Posterior cingulate gyrus (tissue), 11 donors: ENCODE measurements at regions of chr7 and their contacts with region 1.

Region 1: DNA sequence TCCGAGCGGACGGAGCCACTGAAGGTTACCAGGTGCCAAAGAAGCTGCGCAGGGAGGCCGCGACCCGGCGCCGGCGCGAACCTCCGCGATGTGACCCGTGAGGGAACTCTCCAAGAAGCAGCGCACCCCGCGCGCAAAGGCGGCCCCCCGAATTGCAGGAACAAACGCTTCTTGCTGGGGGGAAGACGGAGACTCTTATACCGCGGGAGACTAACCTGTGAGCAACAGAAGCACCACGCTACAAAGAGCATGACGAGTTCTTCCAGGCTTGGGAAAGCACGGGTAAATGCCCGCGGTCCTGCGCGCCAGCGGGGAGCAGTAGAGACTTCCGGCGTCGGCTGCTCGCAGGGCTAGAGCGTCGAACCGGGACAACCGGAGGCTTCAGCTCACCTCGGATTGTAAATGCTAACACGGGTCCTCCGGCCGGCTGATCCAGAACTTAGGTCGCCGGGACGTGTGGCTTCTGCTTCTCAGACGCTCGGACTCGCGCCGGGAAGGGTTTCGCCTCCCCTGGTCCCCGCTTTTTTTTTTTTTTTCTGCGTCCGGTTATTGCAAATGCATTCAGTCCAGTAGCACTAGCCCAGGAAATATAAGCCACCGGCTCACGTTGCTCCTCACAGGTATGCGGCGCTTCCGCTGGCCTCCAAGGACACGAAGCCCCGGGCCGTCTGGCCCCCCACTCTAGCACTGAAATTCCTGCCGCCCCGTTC is at the start of gene COA1:
- DNase-seq: peak; percentile 82 to 98 (median 88)

Region 2: GRCh38 chr7:42931834-42932651 is 797.3 kb before region 1 on chr7 and contains the starts of genes MRPL32 and PSMA2:
- intact Hi-C with region 1: loop called (anchors 10 kb)
- DNase-seq: peak; percentile 93 to 99 (median 96)

Region 3: GRCh38 chr7:43454936-43455518 is 274.3 kb before region 1 on chr7:
- intact Hi-C with region 1: loop called (anchors 10 kb)
- DNase-seq: no peak

Region 4: GRCh38 chr7:43553999-43554398 is 175.4 kb before region 1 on chr7:
- intact Hi-C with region 1: no loop called
- DNase-seq: no peak

Region 5: DNA sequence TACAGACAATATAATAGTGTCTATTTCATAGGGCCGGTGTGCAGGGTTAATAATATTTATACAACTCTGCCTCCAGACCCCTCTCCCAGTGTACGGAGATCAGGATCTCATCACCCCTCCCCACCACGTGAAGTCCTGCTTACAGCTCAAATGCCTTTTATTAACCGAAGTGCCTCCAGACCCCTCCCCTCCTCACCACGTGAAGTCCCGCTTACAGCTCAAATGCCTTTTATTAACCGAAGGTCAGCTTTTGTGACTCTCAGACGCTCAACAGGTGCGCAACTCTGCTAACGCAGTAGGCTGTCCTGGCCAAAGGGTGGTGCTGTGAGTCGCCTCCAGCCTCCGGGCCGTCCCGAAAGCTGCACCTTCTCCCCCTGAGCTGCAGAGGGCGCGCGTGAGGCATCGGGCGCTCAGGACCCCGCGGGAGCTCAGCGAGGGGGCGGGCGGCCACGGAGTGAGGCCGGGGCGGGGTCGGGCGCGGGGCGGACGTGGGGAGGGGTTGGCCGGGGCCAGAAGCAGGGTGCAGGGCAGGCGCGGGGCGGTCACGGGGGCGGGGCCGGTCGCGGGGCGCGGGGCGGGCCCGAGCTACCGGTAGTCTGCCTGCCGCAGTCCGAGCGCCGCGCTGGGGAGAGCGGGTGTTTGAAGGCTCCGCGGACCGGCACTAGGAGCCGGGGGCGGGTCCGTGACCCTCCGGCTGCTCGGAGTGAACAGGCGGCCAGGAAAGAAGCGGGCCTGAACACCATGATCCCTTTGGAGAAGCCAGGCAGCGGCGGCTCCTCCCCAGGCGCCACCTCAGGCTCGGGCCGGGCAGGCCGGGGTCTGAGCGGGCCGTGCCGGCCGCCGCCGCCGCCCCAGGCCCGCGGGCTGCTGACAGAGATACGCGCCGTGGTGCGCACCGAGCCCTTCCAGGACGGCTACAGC is 146.6 kb before region 1 on chr7 and contains the start of gene STK17A:
- intact Hi-C with region 1: loop called (anchors 2 kb)
- DNase-seq: peak; percentile 81 to 98 (median 86)

Region 6: DNA sequence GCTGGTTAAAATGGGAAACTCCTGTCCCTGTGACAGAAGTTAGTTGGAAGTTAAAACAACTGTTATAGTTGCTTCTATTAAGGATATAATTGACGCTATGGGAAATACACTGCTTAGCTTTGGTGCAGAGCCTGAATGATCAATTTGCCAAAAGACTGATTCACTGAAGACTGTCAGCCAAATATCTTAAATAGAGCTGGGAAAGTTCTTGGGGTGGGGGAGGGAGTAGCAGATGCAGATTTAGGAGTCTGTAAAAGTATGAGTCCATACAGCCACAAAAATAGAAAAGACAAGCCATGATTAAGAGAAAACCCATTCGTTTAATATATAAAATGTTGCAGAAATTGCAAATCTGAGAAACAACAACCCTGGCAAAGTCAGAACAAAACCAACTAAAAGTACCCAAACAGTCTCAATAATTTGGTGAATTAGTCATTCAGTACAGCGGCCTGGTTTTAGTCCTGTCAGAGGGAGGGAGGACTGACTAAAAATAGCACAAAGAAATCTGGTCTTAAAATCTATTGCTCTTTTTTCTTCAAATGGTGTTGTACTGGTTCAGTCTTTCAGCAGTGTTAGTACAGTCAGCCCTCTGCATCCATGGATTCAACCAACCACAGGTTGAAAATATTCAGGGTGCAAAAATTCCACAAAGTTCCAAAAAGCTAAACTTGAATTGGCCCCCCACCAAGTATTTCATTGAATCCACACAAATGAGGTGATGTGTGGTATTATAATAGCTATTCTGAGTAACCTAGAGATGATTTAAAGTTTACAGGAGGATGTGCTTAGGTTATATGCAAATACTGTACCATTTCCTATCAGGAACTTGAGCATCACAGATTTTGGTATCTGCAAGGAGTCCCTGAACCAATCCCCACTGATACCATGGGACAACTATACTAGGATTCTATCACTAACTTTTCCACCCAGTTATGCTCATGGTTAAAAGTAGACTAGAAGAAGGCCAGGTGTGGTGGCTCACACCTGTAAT is 116.5 kb before region 1 on chr7:
- intact Hi-C with region 1: no loop called
- DNase-seq: no peak

Region 7: DNA sequence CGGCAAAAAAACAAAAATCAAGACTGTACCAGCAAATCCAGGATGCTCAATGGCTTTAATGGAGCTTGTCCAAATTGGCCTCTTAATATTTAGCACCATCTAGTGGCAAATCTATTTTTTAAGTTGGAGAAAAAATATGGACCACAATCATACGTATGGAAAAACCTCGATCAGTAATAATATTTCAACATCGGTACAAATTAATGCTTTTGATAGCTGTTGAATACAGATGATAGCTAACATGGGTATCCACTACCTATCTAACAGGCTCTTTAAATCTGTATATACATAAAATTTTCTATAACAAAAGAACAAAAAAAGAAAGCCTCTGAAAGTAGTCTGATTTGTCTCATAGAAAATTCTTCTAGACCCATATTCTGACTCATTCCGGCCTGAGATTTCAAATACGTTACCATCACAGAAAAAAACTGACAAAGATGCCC is 29.3 kb before region 1 on chr7:
- intact Hi-C with region 1: loop called (anchors 2 kb)
- DNase-seq: no peak

Region 8: DNA sequence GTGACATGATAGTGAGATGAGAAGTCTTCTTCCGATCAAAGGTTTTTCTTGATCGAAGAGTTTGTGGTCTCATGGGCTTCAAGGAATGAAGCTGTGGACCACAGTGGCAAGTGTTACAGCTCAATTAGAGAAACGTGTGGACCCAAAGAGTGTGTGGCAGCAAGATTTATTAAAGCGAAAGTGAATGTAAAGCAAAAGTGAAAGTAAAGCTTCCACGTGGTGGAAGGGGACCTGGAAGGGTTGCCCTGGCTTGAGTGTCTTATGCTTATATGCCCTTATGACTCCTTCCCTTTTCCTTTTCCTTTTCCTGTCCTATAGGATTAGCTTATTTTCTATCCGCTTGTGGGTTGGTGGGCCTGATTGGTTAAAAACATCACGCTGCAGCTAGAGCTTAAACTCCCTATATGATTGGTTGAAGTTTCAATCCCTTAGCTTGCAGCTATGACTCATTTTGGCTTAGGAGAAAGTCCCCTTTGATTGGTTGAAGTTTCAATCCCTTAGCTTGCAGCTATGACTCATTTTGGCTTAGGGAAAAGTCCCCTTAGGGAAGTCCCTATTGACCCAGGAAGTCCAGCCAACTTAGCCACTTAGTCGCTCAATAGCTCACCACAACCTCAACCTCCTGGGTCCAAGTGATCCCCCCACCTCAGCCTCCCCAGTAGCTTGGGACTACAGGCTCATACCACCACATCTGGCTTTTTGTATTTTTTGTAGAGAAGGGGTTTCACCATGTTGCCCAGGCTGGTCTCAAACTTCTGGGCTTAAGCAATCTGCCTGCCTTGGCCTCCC is 105.3 kb after region 1 on chr7:
- intact Hi-C with region 1: loop called (anchors 10 kb)
- DNase-seq: no peak